ENCODE measurements at regions of chr20 and their contacts with region 1.

Region 1: GRCh38 chr20:41028348-41029148 is at the start of gene TOP1:
- DNase-seq: peak; percentile 100
- ATAC-seq: peak; percentile 100
- H3K4me3 ChIP-seq: peak within 1 kb of the TSS; percentile 84 to 94
- H3K27ac ChIP-seq: peak within 1 kb of the TSS; percentile 83 to 93
- H3K4me1 ChIP-seq: peaks cover 0 to 13% of the 10 kb centered on the region in 2 donors
- H3K27me3 ChIP-seq: no peaks in the 10 kb centered on the region
- total RNA-seq, gene TOP1: 30.1 to 32.4 TPM

Region 2: GRCh38 chr20:40896814-40897700 is 131.5 kb before region 1 on chr20:
- intact Hi-C with region 1: no loop called
- DNase-seq: no peak
- ATAC-seq: no peak
- H3K4me3 ChIP-seq: no peak overlapping the region
- H3K27ac ChIP-seq: no peak overlapping the region
- H3K4me1 ChIP-seq: no peaks in the 10 kb centered on the region
- H3K27me3 ChIP-seq: no peaks in the 10 kb centered on the region

Region 3: DNA sequence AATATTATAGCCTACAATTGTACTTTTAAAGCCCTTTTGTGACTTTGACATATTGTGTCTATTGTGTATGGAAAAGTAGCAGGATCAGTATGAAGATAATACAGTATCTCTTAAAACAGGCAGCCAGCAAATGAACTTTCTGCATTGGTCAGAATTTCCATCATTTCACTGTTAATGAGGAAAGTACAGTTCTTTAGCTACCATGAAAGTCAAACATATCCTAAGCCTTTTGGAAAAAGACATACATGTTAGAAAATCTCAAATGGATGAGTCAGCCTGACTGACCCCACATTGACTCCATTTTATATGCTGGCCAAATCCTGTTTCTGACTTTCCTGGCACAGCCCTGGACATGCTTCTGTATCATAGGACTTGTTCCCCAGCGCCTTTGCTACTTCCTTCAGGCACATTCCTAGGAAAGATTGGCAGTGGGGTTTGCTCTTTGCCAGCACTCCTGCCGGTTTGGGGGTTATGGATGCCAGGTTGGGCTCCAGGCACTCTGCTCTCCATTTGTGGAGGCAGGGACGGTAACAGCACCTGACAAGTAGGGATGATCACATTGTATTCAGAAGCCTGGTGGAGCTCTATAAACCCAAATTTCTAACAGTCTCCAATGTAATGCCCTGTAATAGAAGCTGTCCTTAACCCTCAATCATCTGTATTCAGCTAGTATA is 43.8 kb after region 1 on chr20:
- intact Hi-C with region 1: loop called (anchors 2 to 5 kb)
- DNase-seq: peak in 1 of 2 donors; percentile 59
- ATAC-seq: peak; percentile 79
- H3K4me3 ChIP-seq: no peak overlapping the region
- H3K27ac ChIP-seq: peak overlapping the region; percentile 51 to 82
- H3K4me1 ChIP-seq: peaks cover 3 to 7% of the 10 kb centered on the region in 2 donors
- H3K27me3 ChIP-seq: no peaks in the 10 kb centered on the region

Region 4: GRCh38 chr20:41232973-41233926 is 204.7 kb after region 1 on chr20:
- intact Hi-C with region 1: no loop called
- DNase-seq: no peak
- ATAC-seq: peak; percentile 54
- H3K4me3 ChIP-seq: no peak overlapping the region
- H3K27ac ChIP-seq: peak overlapping the region; percentile 63 to 99
- H3K4me1 ChIP-seq: peaks cover 0 to 13% of the 10 kb centered on the region in 2 donors
- H3K27me3 ChIP-seq: no peaks in the 10 kb centered on the region

Measured in aorta (tissue), 5 donors.